Activated CD4-positive, alpha-beta T cell treated with anti-CD3 and anti-CD28 coated beads for 36 hours (primary cell): ENCODE measurements at regions of chr5 and their contacts with region 1.

Region 1: DNA sequence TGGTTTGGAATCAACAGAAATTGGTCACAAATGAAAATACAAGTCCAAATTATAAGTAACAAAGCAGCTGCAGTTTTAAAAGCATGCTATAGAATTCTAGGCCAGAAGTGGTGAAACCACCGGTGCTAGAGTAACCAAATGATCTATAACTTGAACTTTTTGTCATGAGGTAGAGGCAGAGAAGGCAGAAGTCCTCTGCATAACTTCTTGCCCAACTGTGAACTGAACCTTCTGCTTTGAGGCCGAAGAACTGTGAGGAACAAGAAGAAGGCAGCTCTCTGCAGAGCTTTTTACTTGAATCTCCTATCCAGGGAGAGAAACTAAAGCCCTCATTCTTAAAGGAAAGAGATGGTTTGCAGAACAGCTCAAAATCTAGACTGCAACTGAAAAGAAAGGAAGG is 36.2 kb upstream of the TENT2 start:
- DNase-seq: no peak
- ATAC-seq: no peak
- H3K4me3 Mint-ChIP-seq: no peak overlapping the region
- H3K27ac Mint-ChIP-seq: no peak overlapping the region
- H3K4me1 Mint-ChIP-seq: no peaks in the 10 kb centered on the region
- H3K27me3 Mint-ChIP-seq: peaks cover 3% of the 10 kb centered on the region

Region 2: DNA sequence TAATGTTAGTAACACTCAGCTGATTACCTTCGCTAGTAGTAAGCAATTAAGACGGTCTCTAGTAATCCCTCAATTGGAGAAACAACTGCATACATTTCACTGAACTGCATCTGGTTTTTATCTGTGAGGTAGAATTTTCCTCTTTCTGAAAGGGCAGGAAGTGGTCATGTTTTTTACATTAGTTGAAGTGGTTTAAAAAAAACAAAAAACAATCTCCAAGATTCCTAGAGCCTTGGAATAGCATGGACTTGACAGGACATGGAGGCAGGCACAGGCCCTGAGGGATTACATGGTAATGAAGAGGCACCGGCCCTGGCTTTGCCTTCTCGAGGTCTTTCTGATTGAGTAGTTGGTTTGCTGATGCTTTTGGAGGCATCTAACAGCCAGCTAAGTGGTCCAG is 485.0 kb after region 1 on chr5:
- CTCF ChIA-PET with region 1: no interaction called
- POLR2A ChIA-PET with region 1: interaction called, 11 read pairs
- intact Hi-C with region 1: no loop called
- DNase-seq: no peak
- ATAC-seq: no peak
- H3K4me3 Mint-ChIP-seq: no peak overlapping the region
- H3K27ac Mint-ChIP-seq: no peak overlapping the region
- H3K4me1 Mint-ChIP-seq: peaks cover 4% of the 10 kb centered on the region
- H3K27me3 Mint-ChIP-seq: no peaks in the 10 kb centered on the region